CD8-positive, alpha-beta T cell (primary cell): ENCODE measurements at regions of chr2 and their contacts with region 1.

Region 1: GRCh38 chr2:206783718-206784117 is 18.3 kb downstream of the FASTKD2 start:
- DNase-seq: no peak
- ATAC-seq: peak; percentile 44
- H3K4me3 ChIP-seq: no peak overlapping the region
- H3K4me3 Mint-ChIP-seq: no peak overlapping the region
- H3K27ac ChIP-seq: no peak overlapping the region
- H3K27ac Mint-ChIP-seq: no peak overlapping the region
- H3K4me1 ChIP-seq: no peaks in the 10 kb centered on the region
- H3K4me1 Mint-ChIP-seq: peaks cover 11% of the 10 kb centered on the region
- H3K27me3 ChIP-seq: no peaks in the 10 kb centered on the region
- H3K27me3 Mint-ChIP-seq: no peaks in the 10 kb centered on the region
- CTCF ChIP-seq: no peak

Region 2: GRCh38 chr2:206556357-206556949 is 227.3 kb before region 1 on chr2:
- CTCF ChIA-PET with region 1: interaction called, 5 read pairs
- POLR2A ChIA-PET with region 1: no interaction called
- intact Hi-C with region 1: loop called (anchors 2 to 5 kb)
- DNase-seq: peak in 2 of 9 experiments; percentile 19 to 38
- ATAC-seq: no peak
- H3K4me3 ChIP-seq: no peak overlapping the region
- H3K4me3 Mint-ChIP-seq: no peak overlapping the region
- H3K27ac ChIP-seq: no peak overlapping the region
- H3K27ac Mint-ChIP-seq: no peak overlapping the region
- H3K4me1 ChIP-seq: peaks cover 5% of the 10 kb centered on the region
- H3K4me1 Mint-ChIP-seq: peaks cover 4% of the 10 kb centered on the region
- H3K27me3 ChIP-seq: no peaks in the 10 kb centered on the region
- H3K27me3 Mint-ChIP-seq: no peaks in the 10 kb centered on the region
- CTCF ChIP-seq: peak; percentile 20

Region 3: GRCh38 chr2:206765242-206766056 is 18.3 kb before region 1 on chr2 and contains the starts of genes FASTKD2 and MDH1B:
- CTCF ChIA-PET with region 1: interaction called, 5 read pairs
- POLR2A ChIA-PET with region 1: interaction called, 4 read pairs
- intact Hi-C with region 1: loop called in 1 of 2 experiments (anchors 1 kb)
- DNase-seq: peak; percentile 64 to 94 (median 81)
- ATAC-seq: peak; percentile 87
- H3K4me3 ChIP-seq: peak within 1 kb of the TSS; percentile 62 to 94
- H3K4me3 Mint-ChIP-seq: peak within 1 kb of the TSS; percentile 94
- H3K27ac ChIP-seq: peak within 1 kb of the TSS; percentile 93 to 97
- H3K27ac Mint-ChIP-seq: peak within 1 kb of the TSS; percentile 98
- H3K4me1 ChIP-seq: peaks cover 40% of the 10 kb centered on the region
- H3K4me1 Mint-ChIP-seq: peaks cover 41% of the 10 kb centered on the region
- H3K27me3 ChIP-seq: no peaks in the 10 kb centered on the region
- H3K27me3 Mint-ChIP-seq: no peaks in the 10 kb centered on the region
- CTCF ChIP-seq: no peak
- total RNA-seq, gene FASTKD2: 31.3 to 33.8 TPM
- total RNA-seq, gene MDH1B: 0.19 to 0.33 TPM

Region 4: DNA sequence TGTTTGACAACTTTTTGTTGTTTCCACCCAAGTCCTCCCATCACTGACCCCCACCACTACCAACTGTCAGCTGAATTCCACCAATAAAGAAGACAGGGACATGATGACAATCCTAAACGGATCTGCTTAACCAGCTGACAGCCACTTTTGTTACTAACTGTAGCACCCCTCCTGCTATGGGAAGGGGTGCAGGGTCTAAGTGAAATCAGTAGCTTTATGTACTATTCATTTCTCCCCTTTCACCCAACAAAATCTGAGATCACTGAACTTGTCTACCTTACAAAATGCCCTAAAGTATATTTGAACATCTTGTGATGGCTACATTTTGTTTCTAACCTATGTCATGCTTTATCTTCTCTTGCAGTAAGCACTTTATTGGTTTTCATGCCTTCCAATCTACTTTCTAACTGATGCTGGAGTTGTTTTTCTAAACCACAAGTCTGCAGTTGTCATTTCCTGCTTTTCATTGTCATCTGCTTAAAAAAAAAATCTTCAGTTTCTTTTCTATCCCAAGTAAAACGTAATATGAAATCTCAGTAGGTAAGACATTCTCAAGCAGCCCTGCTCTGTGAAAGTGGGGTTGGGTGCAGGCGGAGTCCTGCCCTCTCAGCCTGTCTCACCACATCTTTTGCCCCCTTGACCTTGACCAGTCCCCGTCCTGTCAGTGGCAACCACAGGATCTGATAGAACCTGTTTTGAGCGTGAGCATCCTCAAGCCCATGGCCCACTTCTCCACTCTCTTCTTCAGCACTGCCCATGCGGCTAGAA is 75.4 kb after region 1 on chr2:
- CTCF ChIA-PET with region 1: no interaction called
- POLR2A ChIA-PET with region 1: no interaction called
- intact Hi-C with region 1: no loop called
- DNase-seq: peak in 4 of 9 experiments; percentile 8 to 57 (median 42)
- ATAC-seq: peak; percentile 86
- H3K4me3 ChIP-seq: peak overlapping the region; percentile 1 to 7
- H3K4me3 Mint-ChIP-seq: peak overlapping the region; percentile 76
- H3K27ac ChIP-seq: peak overlapping the region; percentile 23 to 29
- H3K27ac Mint-ChIP-seq: peak overlapping the region; percentile 93
- H3K4me1 ChIP-seq: peaks cover 16% of the 10 kb centered on the region
- H3K4me1 Mint-ChIP-seq: peaks cover 24% of the 10 kb centered on the region
- H3K27me3 ChIP-seq: no peaks in the 10 kb centered on the region
- H3K27me3 Mint-ChIP-seq: no peaks in the 10 kb centered on the region
- CTCF ChIP-seq: no peak